ENCODE measurements at regions of chr16 and their contacts with region 1.

Region 1: GRCh38 chr16:23025692-23026307 is 123.5 kb downstream of the USP31 start:
- DNase-seq: no peak
- H3K4me3 ChIP-seq: no peak overlapping the region
- H3K27ac ChIP-seq: no peak overlapping the region
- H3K4me1 ChIP-seq: no peaks in the 10 kb centered on the region
- H3K27me3 ChIP-seq: peaks cover 24% of the 10 kb centered on the region
- CTCF ChIP-seq: no peak

Region 2: GRCh38 chr16:23122144-23122543 is 96.3 kb after region 1 on chr16:
- CTCF ChIA-PET with region 1: interaction called, 11 read pairs
- POLR2A ChIA-PET with region 1: no interaction called
- intact Hi-C with region 1: no loop called
- DNase-seq: no peak
- H3K4me3 ChIP-seq: no peak overlapping the region
- H3K27ac ChIP-seq: no peak overlapping the region
- H3K4me1 ChIP-seq: peaks cover 56% of the 10 kb centered on the region
- H3K27me3 ChIP-seq: no peaks in the 10 kb centered on the region
- CTCF ChIP-seq: no peak

Measured in A673 (cell line).